ENCODE measurements at regions of chr17 and their contacts with region 1.

Region 1: DNA sequence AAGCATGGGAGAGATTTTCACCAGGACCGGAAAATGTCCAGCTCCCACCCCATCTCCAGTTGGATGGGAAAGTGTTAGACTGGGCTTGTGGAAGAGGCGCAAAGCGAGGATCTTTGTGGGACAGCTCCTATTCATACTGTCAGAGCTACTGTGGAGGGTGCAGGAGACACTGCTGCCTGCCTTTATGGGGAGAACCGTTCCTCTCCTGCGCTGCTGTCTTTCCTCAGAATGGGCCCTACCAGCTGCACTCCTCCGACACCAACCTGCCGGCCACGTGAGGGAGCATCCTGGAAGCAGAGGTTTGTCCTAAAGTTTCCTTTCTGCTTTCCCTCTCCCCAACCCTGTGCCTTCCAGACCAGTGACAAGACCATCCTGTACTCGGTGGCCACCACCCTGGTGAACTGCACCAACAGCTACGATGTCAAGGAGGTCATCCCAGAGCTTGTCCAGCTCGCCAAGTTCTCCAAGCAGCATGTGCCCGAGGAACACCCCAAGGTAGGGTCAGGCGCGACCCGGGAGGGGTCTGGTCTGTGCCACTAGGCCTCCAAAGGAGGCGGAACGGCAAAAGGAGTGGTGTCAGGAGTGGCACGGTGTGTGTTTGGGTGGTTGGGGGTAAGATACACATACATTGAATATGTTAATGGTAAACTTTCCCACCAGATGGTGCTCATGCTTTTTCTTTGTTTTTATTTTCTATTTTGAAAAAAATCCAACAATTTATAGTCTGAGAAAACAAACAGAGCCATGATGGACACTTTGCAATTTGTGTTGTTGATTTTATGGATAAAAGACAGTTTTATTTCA is 23.0 kb downstream of the SLC35G3 start:
- DNase-seq: no peak
- ATAC-seq: peak; percentile 75; the same call in 1 of the 2 replicates
- H3K4me3 ChIP-seq: no peak overlapping the region
- H3K27ac ChIP-seq: no peak overlapping the region
- H3K4me1 ChIP-seq: no peaks in the 10 kb centered on the region
- H3K27me3 ChIP-seq: no peaks in the 10 kb centered on the region; the same call in 1 of the 2 replicates
- CTCF ChIP-seq: no peak

Region 2: DNA sequence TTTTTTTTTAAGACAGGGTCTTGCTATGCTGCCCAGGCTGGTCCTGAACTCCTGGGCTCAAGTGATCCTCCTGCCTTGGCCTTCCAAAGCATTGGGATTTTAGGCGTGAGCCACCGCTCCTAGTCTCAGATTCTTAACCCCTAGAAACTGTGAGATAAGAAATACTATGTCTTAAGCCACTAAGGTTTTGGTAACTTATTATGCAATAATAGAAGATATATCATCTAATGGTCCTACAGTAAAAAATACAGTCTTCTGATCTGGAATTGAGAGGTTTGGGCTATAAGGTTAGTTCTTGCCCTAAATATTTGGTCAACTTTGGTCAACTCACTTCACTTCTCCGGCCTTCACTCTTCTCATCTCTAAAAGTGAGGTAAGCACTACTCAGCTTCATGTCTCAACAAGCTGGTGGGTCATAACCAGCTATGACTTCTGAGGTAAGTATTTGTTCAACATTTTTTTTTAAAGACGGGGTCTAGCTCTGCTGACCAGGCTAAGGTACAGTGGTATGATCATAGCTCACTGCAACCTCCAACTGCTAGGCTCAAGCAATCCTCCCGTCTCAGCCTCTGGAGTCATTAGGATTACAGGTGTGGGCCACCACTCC is 66.2 kb before region 1 on chr17:
- CTCF ChIA-PET with region 1: no interaction called
- POLR2A ChIA-PET with region 1: no interaction called
- in situ Hi-C with region 1: no loop called
- intact Hi-C with region 1: no loop called
- DNase-seq: no peak
- ATAC-seq: no peak
- H3K4me3 ChIP-seq: no peak overlapping the region
- H3K27ac ChIP-seq: no peak overlapping the region
- H3K4me1 ChIP-seq: no peaks in the 10 kb centered on the region
- H3K27me3 ChIP-seq: no peaks in the 10 kb centered on the region
- CTCF ChIP-seq: no peak

Region 3: DNA sequence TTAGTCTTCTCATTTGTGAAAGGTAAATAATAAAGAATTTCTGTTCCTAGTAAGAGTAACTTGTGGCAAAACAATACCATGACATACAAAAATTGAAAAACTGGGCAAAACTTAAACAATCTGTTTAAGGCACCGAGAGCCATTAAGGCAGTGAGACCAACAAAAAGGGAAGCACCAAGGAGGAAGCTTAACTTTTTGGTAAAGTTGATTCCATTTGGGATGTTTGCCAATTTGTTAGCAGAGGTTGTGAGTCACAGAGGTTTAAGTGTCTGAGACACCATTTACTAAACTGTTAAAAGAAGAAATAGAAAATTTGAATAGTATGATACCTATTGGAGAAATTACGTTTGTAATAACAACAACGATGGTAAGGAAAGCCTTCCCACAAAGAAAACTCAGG is 18.1 kb after region 1 on chr17:
- CTCF ChIA-PET with region 1: no interaction called
- POLR2A ChIA-PET with region 1: interaction called, 10 read pairs
- in situ Hi-C with region 1: no loop called
- intact Hi-C with region 1: no loop called
- DNase-seq: no peak
- ATAC-seq: no peak
- H3K4me3 ChIP-seq: no peak overlapping the region
- H3K27ac ChIP-seq: no peak overlapping the region
- H3K4me1 ChIP-seq: no peaks in the 10 kb centered on the region
- H3K27me3 ChIP-seq: no peaks in the 10 kb centered on the region
- CTCF ChIP-seq: no peak

Region 4: DNA sequence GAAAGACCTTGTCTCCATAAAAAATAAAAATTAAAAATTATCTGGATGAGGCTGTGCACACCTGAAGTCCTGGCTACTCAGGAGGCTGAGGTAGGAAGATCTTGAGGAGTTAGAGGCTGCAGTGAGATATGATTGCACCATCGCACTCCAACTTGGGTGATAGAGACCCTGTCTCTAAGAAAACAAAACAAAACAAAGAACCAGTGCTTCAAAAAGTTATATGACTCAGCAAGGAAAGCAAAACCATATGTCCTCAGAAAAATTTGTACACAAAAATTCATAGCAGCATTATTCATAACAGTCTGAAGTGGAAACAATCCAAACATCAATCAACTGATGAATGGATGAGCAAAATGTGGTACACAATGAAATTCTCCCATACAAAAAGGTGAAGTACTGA is 120.6 kb after region 1 on chr17:
- CTCF ChIA-PET with region 1: no interaction called
- POLR2A ChIA-PET with region 1: no interaction called
- in situ Hi-C with region 1: no loop called
- intact Hi-C with region 1: loop called (anchors 10 kb)
- DNase-seq: no peak
- ATAC-seq: no peak
- H3K4me3 ChIP-seq: no peak overlapping the region
- H3K27ac ChIP-seq: no peak overlapping the region
- H3K4me1 ChIP-seq: no peaks in the 10 kb centered on the region
- H3K27me3 ChIP-seq: peaks cover 2% of the 10 kb centered on the region; the same call in 1 of the 2 replicates
- CTCF ChIP-seq: no peak

Region 5: DNA sequence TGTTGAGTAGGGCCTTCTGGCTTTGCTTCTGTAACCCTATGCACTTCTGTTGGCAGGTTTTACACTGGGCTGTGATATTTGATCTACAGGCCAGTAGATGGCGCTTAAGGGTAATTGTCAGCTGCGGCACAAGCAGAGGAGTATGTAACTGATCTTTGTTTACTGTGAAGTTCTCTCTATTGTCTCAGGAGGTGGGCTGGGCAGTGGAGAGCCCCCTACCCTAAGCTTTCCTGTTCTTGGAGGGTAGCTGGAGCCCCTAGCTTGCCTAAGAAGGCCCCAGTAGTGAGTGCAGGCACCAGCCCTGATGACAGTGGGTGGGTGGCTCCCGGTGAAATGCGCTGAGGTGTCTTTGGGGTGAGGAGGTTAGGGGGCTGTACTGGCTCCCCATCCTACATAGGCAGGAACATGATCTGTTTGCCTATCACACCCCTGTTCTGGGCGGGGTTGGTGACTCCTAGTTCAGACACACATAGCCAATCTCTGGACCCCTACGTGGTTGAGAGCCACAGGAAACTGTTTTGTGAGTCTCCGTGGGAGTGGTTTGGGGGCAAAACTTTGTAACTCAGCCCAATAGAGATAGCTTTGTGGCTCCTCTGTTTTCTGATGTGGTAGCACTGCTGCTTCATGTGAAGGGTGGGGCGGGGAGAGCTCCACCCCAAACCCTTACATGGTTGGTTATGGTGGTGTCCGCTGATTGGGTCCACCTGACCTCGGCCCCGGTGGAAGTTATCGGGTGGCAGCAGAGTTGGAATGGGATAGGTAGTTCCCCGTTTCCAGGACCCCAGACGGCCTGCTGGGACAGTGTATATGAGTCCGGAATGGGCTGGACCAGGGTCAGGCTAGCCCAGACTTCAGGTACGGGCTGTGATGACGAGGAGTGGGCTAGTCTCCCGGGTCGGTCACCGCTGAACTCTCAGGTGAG is 141.9 kb after region 1 on chr17:
- CTCF ChIA-PET with region 1: interaction called, 15 read pairs
- POLR2A ChIA-PET with region 1: no interaction called
- in situ Hi-C with region 1: no loop called
- intact Hi-C with region 1: no loop called
- DNase-seq: peak; percentile 32
- ATAC-seq: peak; percentile 98
- H3K4me3 ChIP-seq: no peak overlapping the region
- H3K27ac ChIP-seq: no peak overlapping the region
- H3K4me1 ChIP-seq: no peaks in the 10 kb centered on the region
- H3K27me3 ChIP-seq: no peaks in the 10 kb centered on the region; the same call in 1 of the 2 replicates
- CTCF ChIP-seq: peak; percentile 84

Region 6: DNA sequence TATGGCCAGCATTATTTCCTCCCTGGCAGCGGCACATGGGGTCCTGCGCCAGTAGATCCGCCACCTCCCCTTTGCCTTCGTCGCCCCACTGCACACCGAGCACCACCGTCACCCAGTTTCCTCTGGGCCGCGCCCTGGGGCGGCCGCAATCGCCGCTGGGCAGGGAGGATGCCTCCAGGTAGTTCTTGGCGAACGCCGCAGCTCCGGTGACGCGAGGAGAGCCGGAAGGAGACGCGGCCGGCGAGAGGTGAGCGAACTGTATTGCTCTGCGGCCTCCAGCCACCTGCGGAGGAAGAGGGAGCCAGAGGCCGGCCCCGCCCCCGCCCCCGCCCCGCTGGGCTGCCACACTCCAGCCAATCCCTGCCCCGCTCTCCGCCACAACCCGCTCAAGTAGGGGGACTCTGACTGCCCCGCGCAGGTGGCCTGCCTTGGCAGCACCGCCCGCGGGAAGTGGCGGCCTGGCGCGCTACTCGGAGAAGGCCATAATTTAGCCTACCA is 289.2 kb after region 1 on chr17:
- CTCF ChIA-PET with region 1: no interaction called
- POLR2A ChIA-PET with region 1: interaction called, 11 read pairs
- in situ Hi-C with region 1: no loop called
- intact Hi-C with region 1: no loop called
- DNase-seq: no peak
- ATAC-seq: peak; percentile 97
- H3K4me3 ChIP-seq: peak overlapping the region; percentile 40 to 47
- H3K27ac ChIP-seq: no peak overlapping the region
- H3K4me1 ChIP-seq: no peaks in the 10 kb centered on the region
- H3K27me3 ChIP-seq: peaks cover 23% of the 10 kb centered on the region
- CTCF ChIP-seq: no peak

Region 7: DNA sequence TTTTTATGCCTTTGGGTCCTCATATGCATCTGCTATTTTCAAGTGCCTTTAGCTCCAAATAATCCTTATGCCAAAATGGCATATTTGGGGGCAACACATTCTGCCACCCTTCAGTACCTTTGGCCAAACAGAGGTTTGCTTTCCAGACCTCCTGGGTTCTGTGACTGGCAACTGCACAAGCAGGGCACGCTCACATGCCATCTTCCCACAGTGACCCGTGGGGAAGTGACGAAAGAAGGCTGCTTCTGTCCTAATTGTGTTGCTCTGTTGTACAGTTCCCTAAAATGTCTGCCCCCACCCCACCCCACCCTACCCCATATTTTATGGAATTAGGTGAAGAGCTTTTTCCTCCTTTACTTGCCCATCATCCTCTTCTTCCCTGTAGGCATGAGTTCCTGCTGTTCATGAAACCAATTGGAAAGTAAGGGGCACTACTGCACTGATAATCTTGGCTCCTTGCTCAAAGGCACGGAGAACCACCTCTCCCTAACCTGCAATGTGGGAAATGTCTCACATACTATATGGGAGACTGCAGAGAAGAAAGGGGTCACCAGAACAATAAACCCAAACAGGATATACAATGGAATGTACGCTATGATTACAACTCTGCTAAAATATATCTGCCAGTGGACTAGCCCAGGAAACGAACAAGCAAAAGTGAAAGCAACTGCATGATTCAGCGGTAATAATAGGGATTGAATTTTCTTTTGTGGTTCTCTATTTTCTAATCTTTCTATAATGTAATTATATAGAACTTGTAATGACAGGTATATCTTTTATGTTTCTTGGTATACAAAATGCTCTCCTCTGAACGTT is 369.6 kb after region 1 on chr17:
- CTCF ChIA-PET with region 1: interaction called, 9 read pairs
- POLR2A ChIA-PET with region 1: no interaction called
- in situ Hi-C with region 1: loop called (anchors 25 kb)
- intact Hi-C with region 1: loop called (anchors 2 kb)
- DNase-seq: no peak
- ATAC-seq: peak; percentile 71
- H3K4me3 ChIP-seq: peak overlapping the region; percentile 16 to 28
- H3K27ac ChIP-seq: peak overlapping the region; percentile 48; the same call in 1 of the 2 replicates
- H3K4me1 ChIP-seq: no peaks in the 10 kb centered on the region
- H3K27me3 ChIP-seq: no peaks in the 10 kb centered on the region
- CTCF ChIP-seq: no peak

Region 8: GRCh38 chr17:35816723-35817122 is 645.6 kb after region 1 on chr17:
- CTCF ChIA-PET with region 1: no interaction called
- POLR2A ChIA-PET with region 1: no interaction called
- in situ Hi-C with region 1: no loop called
- intact Hi-C with region 1: no loop called
- DNase-seq: no peak
- ATAC-seq: no peak
- H3K4me3 ChIP-seq: no peak overlapping the region
- H3K27ac ChIP-seq: no peak overlapping the region
- H3K4me1 ChIP-seq: peaks cover 2% of the 10 kb centered on the region; the same call in 1 of the 2 replicates
- H3K27me3 ChIP-seq: no peaks in the 10 kb centered on the region
- CTCF ChIP-seq: no peak